ENCODE measurements at regions of chr14 and their contacts with region 1.

Region 1: DNA sequence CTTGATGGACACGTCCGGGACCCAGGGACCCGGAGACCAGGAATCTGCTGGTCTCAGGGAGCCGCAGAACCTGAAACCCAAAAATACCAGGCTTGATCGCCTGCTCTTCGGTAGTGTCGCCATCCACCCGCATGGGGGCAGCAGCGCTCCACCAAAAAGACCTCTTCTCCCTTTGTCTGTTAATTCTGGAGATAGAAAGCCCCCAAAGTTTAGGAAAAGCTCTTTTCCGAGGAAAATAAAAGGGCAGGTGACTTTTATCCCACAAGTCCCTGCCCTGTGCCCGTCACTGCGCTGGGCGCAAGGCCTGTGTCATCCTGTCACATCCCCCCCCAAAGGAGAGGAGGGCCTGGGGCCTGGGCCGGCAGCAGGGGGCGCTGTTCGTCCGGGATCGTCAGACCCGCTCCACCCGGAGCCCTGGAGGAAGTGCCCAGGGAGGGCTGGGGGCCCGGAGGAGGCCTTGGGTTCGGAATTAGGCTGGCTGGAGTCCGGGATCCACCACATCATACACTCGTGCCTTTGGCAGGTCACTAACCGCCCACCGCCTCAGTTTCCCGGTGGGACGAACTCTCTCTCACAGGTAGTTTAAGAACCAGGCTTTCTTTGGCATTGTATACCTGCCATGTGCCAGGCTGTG is 31.9 kb downstream of the DAD1 start:
- DNase-seq: peak; percentile 90
- ATAC-seq: peak; percentile 43
- H3K4me3 Mint-ChIP-seq: peak overlapping the region; percentile 80
- H3K27ac Mint-ChIP-seq: peak overlapping the region; percentile 98
- H3K4me1 Mint-ChIP-seq: peaks cover 88% of the 10 kb centered on the region
- H3K27me3 Mint-ChIP-seq: peaks cover 4% of the 10 kb centered on the region
- CTCF ChIP-seq: peak; percentile 100

Region 2: DNA sequence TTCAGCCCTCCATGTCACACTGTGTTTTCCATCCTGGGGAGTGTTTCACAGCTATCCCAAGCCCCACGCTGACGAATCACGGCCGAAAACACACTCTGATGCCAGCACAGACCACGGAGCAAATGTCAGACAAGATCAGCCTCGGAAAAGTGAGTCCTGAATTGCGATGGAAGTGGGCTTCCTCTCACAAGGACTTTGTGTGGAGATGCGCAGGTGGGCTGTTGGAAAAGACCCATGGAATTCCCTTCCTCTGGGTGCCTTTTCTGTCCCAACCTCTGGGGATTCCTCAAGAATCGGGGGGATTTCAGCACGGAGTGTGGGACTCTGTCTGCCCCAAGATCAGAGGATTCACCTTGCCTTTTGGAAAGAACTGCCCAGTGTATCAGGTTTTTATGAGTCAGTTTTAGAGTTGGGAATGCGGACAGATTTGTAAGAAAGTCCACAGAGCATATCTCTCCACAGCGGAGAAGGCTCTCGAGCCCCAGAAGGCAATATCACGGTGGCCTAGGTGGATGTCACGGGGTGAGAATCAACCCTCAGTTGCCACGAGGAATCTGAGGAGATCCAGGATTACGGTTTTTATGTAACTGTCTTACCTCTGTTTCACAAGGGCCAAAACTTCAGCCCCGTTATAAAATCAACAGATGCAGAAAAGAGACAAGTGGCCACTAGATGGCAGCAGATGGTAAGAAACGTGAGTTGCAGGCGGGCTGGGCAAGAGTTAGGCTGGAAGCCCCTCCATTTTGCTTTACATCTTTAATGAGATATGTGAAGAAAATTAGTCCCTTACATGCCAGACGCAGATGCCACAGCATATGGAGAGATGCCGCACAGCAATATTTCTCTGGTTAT is 170.0 kb before region 1 on chr14:
- CTCF ChIA-PET with region 1: interaction called, 60 read pairs
- POLR2A ChIA-PET with region 1: interaction called, 42 read pairs
- intact Hi-C with region 1: loop called (anchors 1 kb)
- DNase-seq: peak; percentile 46
- ATAC-seq: peak; percentile 15
- H3K4me3 Mint-ChIP-seq: peak overlapping the region; percentile 24
- H3K27ac Mint-ChIP-seq: peak overlapping the region; percentile 98
- H3K4me1 Mint-ChIP-seq: peaks cover 78% of the 10 kb centered on the region
- H3K27me3 Mint-ChIP-seq: no peaks in the 10 kb centered on the region
- CTCF ChIP-seq: peak; percentile 18

Region 3: DNA sequence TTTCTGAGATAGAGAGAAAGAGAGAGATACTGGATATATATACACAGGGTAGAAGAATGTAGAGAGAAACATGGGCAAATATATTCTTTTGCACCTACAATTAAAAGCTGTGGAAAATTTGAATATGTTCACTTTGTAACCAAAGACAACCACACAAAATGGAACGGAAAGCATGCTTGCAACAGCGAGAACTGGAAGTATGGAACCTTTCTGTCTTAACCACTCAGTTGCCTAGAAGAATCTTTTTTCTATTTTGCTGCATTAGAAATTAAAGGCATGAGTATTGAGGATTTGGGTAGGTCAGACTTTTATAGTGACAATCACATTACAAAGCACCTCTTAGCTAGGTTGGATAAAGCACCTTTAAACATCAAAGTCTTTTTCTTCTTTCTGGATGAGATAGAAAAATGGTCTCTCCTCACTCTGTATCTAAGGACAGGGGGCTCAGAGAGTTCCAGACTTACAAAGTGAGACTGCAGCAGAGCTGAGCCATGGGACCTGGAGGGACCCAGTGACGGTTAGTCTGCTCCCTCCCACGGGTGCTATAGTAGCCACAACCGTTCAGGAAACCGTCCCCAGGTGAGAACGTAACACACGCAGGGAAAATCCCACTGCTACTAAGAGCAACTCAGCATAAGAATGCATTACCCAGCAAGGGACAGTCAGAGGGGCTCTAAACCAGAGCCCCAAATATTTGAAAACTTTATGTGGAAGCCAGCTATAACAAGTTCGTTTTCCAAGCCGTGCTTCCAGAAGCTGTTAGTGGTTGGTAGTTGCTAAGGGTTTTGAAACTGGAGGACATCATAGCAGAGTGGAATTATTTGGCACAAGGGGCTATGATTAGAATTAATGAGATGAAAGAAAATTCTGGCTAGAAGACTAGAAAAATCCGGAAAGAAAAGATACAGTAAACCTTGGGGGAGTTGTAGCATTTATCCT is 65.2 kb before region 1 on chr14:
- CTCF ChIA-PET with region 1: interaction called, 24 read pairs
- POLR2A ChIA-PET with region 1: interaction called, 64 read pairs
- intact Hi-C with region 1: loop called (anchors 1 kb)
- DNase-seq: no peak
- ATAC-seq: peak; percentile 37
- H3K4me3 Mint-ChIP-seq: peak overlapping the region; percentile 42
- H3K27ac Mint-ChIP-seq: peak overlapping the region; percentile 88
- H3K4me1 Mint-ChIP-seq: peaks cover 98% of the 10 kb centered on the region
- H3K27me3 Mint-ChIP-seq: no peaks in the 10 kb centered on the region
- CTCF ChIP-seq: no peak

Region 4: GRCh38 chr14:22531451-22532344 is 25.4 kb before region 1 on chr14:
- CTCF ChIA-PET with region 1: interaction called, 48 read pairs
- POLR2A ChIA-PET with region 1: interaction called, 89 read pairs
- intact Hi-C with region 1: loop called (anchors 1 kb)
- DNase-seq: no peak
- ATAC-seq: peak; percentile 79
- H3K4me3 Mint-ChIP-seq: peak overlapping the region; percentile 80
- H3K27ac Mint-ChIP-seq: peak overlapping the region; percentile 93
- H3K4me1 Mint-ChIP-seq: peaks cover 76% of the 10 kb centered on the region
- H3K27me3 Mint-ChIP-seq: no peaks in the 10 kb centered on the region
- CTCF ChIP-seq: no peak

Region 5: DNA sequence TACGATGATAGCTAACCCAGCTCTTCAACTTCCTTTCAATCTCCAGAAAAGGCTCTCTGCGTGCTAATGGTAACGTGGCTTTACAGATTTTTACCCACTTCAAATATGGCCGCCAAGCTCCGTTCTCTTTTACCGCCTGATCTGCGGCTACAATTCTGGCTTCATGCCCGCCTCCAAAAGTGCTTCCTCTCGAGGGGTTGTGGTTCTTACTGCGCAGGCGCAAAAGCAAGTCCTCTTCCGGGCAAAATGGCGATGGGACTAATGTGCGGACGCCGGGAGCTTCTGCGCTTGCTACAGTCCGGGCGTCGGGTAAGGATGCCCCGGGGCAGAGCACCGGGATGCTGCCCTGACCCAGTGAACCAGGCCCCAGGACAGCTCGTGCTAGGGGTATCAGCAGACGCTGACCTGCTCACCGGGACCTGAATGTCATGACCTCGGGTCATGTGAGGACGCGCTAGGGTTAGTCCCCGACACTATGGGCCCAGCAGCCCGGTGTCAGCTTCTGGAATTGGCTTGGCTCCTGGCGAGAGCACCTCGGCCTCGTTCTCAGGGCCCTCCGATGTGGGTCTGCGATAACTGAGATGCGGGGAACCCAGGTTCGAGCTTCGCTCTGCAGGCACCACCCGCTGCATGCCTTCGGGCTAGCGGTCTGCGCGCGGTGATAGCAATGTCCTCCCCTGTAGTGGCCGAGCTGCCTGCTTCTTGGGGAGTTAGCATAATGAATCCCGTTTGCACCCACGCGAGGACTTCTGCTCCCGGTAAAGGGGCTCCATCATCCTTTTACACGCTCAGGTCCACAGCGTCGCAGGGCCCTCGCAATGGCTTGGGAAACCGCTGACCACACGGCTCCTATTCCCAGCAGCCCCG is 209.6 kb after region 1 on chr14 and contains the start of gene OXA1L:
- CTCF ChIA-PET with region 1: interaction called, 7 read pairs
- POLR2A ChIA-PET with region 1: interaction called, 13 read pairs
- intact Hi-C with region 1: no loop called
- DNase-seq: peak; percentile 79
- ATAC-seq: peak; percentile 89
- H3K4me3 Mint-ChIP-seq: peak within 1 kb of the TSS; percentile 93
- H3K27ac Mint-ChIP-seq: peak within 1 kb of the TSS; percentile 97
- H3K4me1 Mint-ChIP-seq: peaks cover 35% of the 10 kb centered on the region
- H3K27me3 Mint-ChIP-seq: no peaks in the 10 kb centered on the region
- CTCF ChIP-seq: no peak
- total RNA-seq, gene OXA1L: 174 and 190 TPM in 2 replicates

Region 6: DNA sequence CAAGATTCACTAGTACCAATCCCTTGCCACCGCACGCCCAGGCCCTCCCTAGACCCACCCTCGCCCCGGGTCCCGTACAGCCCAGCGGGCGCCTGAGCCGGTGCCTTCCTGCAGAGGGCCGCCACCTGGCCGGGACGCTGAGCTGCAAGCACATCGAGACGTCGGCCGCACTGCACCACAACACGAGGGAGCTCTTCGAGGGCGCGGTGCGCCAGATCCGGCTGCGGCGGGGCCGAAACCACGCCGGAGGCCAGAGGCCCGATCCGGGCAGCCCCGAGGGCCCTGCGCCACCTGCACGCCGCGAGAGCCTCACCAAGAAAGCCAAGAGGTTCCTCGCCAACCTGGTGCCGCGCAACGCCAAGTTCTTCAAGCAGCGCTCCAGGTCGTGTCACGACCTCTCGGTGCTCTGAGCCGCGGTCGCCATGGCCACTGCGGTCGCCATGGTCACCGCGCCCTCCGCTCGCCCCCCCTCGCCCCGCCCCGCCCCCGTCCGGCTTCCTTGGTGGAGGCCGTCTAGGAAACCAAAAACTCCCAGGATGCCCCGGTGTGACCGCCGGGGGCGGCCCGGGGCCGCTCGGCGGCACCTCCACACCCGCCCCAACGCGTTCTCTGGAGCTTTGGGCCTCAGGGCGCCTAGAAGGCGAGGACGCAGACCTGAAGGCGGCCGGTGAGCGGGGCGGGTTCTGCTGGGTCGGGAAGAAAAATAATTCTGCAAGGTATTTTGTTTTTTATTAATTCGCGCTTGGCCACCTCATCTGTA is 329.6 kb after region 1 on chr14:
- CTCF ChIA-PET with region 1: interaction called, 3 read pairs
- POLR2A ChIA-PET with region 1: interaction called, 10 read pairs
- intact Hi-C with region 1: loop called (anchors 1 kb)
- DNase-seq: peak; percentile 71
- ATAC-seq: peak; percentile 55
- H3K4me3 Mint-ChIP-seq: peak overlapping the region; percentile 90
- H3K27ac Mint-ChIP-seq: peak overlapping the region; percentile 97
- H3K4me1 Mint-ChIP-seq: peaks cover 80% of the 10 kb centered on the region
- H3K27me3 Mint-ChIP-seq: no peaks in the 10 kb centered on the region
- CTCF ChIP-seq: no peak

Region 7: DNA sequence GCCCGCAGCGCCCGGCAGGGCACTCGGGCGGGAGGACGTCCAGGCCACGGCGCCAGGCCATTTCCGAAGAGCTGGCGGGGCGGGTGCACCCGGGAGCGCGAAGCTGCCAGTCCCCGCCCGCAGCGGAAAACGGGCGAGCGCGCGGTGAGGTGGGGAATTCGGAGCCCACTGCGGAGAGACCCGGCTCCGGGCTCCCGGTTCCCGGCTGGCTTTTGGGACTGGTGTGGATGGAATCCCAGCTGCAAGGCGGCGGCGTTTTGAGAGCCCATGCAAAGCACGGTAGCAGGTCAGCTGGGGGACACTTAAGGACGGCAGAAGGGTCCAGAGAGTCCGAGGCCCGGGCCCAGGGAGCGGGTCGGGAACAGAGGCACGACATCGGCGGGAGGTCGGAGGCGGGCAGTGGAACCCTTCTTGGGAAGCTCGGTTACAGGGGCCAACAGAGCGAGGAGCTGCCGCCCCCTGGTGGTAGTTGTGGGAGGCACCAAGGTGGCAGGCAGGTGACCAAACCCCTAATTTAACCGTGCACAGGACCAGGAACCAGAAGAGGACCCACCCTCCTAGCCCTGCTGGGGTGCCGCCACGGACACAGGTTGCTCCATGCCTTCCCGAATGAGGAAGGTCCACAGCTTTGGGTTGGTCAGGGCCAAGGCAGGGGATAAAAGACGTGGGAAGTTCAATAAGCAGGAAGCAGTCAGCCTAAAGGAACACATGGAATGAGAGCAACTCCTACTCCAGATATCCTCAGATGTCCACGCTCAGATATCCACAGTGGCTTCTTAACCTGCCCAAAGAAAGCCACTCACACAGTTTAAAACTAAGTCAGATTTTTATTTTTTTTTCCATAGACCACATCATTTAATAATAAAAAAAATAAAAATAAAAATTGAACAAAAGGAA is 500.9 kb after region 1 on chr14:
- CTCF ChIA-PET with region 1: no interaction called
- POLR2A ChIA-PET with region 1: no interaction called
- intact Hi-C with region 1: loop called (anchors 1 kb)
- DNase-seq: peak; percentile 80
- ATAC-seq: peak; percentile 73
- H3K4me3 Mint-ChIP-seq: peak overlapping the region; percentile 88
- H3K27ac Mint-ChIP-seq: no peak overlapping the region
- H3K4me1 Mint-ChIP-seq: peaks cover 18% of the 10 kb centered on the region
- H3K27me3 Mint-ChIP-seq: peaks cover 2% of the 10 kb centered on the region
- CTCF ChIP-seq: peak; percentile 58

Measured in activated B cell treated with CpG ODN at 0.5 μM for 24 hours (primary cell).